ENCODE measurements at regions of chr5 and their contacts with region 1.

Region 1: GRCh38 chr5:8123559-8123958 is 254.6 kb downstream of the MTRR start:
- DNase-seq: no peak
- H3K4me3 ChIP-seq: no peak overlapping the region
- H3K27ac ChIP-seq: no peak overlapping the region
- H3K27me3 ChIP-seq: no peaks in the 10 kb centered on the region
- CTCF ChIP-seq: no peak

Region 2: GRCh38 chr5:8429778-8430758 is 306.5 kb after region 1 on chr5:
- CTCF ChIA-PET with region 1: interaction called, 12 read pairs
- POLR2A ChIA-PET with region 1: no interaction called
- DNase-seq: no peak
- H3K4me3 ChIP-seq: no peak overlapping the region
- H3K27ac ChIP-seq: no peak overlapping the region
- H3K27me3 ChIP-seq: no peaks in the 10 kb centered on the region
- CTCF ChIP-seq: no peak